ENCODE measurements at regions of chr10 and their contacts with region 1.

Region 1: DNA sequence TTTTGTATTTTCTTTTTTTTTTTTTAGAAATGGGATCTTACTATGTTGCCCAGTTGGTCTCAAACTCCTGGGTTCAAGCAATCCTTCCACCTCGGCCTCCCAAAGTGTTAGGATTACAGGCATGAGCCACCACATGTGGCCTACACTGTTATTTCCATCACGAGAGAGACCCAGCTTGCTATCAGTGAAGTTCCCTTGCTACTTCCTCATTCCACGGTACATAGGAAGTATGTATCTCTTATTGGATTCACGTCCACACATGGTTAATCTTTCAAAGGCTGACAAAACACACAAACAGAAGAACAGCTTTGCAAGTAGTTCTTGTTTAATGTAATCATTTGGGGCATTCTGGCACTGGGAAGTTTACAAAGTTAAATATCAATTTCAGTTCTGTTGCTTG is 50.9 kb downstream of the DCLRE1A start:
- DNase-seq: no peak
- ATAC-seq: no peak
- H3K4me3 ChIP-seq: no peak overlapping the region
- H3K4me3 Mint-ChIP-seq: no peak overlapping the region
- H3K27ac ChIP-seq: no peak overlapping the region
- H3K27ac Mint-ChIP-seq: no peak overlapping the region
- H3K4me1 ChIP-seq: no peaks in the 10 kb centered on the region
- H3K4me1 Mint-ChIP-seq: peaks cover 0 to 3% (median 0%) of the 10 kb centered on the region in 7 donors
- H3K27me3 ChIP-seq: no peaks in the 10 kb centered on the region
- H3K27me3 Mint-ChIP-seq: peaks cover 12 to 50% (median 16%) of the 10 kb centered on the region in 5 donors

Region 2: DNA sequence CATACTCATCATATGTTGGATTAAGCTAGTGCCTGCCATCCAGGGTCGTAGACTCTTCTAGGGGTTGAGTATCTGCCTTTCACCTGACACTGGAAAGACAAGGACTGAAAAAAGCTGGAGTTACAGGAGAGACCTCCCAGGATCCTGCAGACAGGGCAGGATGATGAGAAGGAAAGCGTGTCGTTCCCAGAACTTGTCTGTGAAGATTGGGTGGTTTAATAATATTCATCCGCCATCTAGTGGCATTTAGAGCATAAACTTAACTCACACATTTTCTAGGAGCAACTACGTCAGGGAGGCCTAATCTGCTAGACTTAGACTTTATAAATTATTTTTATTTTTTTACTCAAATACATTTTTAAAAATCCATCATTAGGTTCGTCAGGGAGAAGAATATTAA is 300.3 kb after region 1 on chr10:
- CTCF ChIA-PET with region 1: interaction called, 24 read pairs
- POLR2A ChIA-PET with region 1: no interaction called
- intact Hi-C with region 1: loop called (anchors 1 kb)
- DNase-seq: peak in 5 of 9 donors; percentile 17 to 39 (median 34)
- ATAC-seq: no peak
- H3K4me3 ChIP-seq: no peak overlapping the region
- H3K4me3 Mint-ChIP-seq: peak overlapping the region in 3 of 10 donors; percentile 6 to 39 (median 13)
- H3K27ac ChIP-seq: no peak overlapping the region
- H3K27ac Mint-ChIP-seq: no peak overlapping the region
- H3K4me1 ChIP-seq: peaks cover 7 to 10% of the 10 kb centered on the region in 2 donors
- H3K4me1 Mint-ChIP-seq: peaks cover 16 to 31% (median 25%) of the 10 kb centered on the region in 7 donors
- H3K27me3 ChIP-seq: peaks cover 4 to 6% of the 10 kb centered on the region in 2 donors
- H3K27me3 Mint-ChIP-seq: peaks cover 24 to 46% (median 27%) of the 10 kb centered on the region in 5 donors

Region 3: DNA sequence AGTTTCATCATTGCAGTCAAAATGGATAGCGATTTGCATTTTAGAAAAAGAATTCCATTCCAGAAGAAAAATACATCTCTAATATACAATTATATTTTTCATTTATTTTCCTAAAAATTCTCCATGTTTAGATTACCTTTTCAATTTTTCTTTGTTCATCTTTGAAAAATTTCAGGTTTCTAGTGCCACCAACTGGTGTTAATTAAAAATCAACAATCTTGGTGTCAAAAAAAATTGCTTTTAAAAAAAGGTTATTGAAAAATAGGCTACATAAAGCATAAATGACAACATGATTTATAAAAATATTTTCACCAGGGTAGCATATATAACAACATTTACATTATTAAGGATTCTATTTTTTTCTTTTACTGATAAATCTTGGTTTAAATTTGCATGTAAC is 318.0 kb after region 1 on chr10:
- CTCF ChIA-PET with region 1: interaction called, 3 read pairs
- POLR2A ChIA-PET with region 1: no interaction called
- intact Hi-C with region 1: loop called in 1 of 2 experiments (anchors 5 kb)
- DNase-seq: no peak
- ATAC-seq: no peak
- H3K4me3 ChIP-seq: no peak overlapping the region
- H3K4me3 Mint-ChIP-seq: no peak overlapping the region
- H3K27ac ChIP-seq: no peak overlapping the region
- H3K27ac Mint-ChIP-seq: no peak overlapping the region
- H3K4me1 ChIP-seq: no peaks in the 10 kb centered on the region
- H3K4me1 Mint-ChIP-seq: no peaks in the 10 kb centered on the region
- H3K27me3 ChIP-seq: no peaks in the 10 kb centered on the region
- H3K27me3 Mint-ChIP-seq: peaks cover 0 to 16% (median 0%) of the 10 kb centered on the region in 5 donors

Region 4: GRCh38 chr10:115129752-115130151 is 1326.8 kb after region 1 on chr10:
- CTCF ChIA-PET with region 1: interaction called, 3 read pairs
- POLR2A ChIA-PET with region 1: no interaction called
- intact Hi-C with region 1: loop called in 1 of 2 experiments (anchors 5 kb)
- DNase-seq: peak in 4 of 9 donors; percentile 2 to 14 (median 6)
- ATAC-seq: no peak
- H3K4me3 ChIP-seq: no peak overlapping the region
- H3K4me3 Mint-ChIP-seq: no peak overlapping the region
- H3K27ac ChIP-seq: no peak overlapping the region
- H3K27ac Mint-ChIP-seq: no peak overlapping the region
- H3K4me1 ChIP-seq: no peaks in the 10 kb centered on the region
- H3K4me1 Mint-ChIP-seq: no peaks in the 10 kb centered on the region
- H3K27me3 ChIP-seq: no peaks in the 10 kb centered on the region
- H3K27me3 Mint-ChIP-seq: peaks cover 1 to 18% (median 12%) of the 10 kb centered on the region in 5 donors